WTC11 (cell line): ENCODE measurements at regions of chr3 and their contacts with region 1.

Region 1: DNA sequence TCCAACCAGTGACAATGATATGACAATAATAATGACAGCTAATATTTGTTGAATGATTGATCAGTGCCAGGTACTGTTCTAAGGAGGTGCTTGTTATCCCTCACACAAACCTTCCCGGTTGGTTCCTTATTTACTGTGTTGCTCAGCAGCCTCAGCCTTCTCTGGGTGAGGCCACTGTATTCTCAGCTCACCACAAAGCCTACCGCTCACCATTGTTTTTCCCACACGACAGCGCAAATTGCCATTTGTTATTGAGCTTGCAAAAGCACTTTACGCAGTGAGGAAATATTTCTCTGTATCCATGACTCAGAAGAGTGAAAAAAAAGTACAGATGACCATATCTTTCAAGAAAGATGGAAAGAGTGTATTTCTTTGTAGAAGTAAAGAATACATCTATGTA is 49.5 kb upstream of the PDZRN3 start:
- DNase-seq: no peak
- ATAC-seq: peak; percentile 90
- H3K4me3 Mint-ChIP-seq: no peak overlapping the region
- H3K27ac Mint-ChIP-seq: peak overlapping the region; percentile 16
- H3K4me1 Mint-ChIP-seq: peaks cover 60% of the 10 kb centered on the region
- H3K27me3 Mint-ChIP-seq: no peaks in the 10 kb centered on the region
- CTCF ChIP-seq: no peak

Region 2: GRCh38 chr3:73687106-73688004 is 13.1 kb after region 1 on chr3:
- CTCF ChIA-PET with region 1: no interaction called
- POLR2A ChIA-PET with region 1: interaction called, 14 read pairs
- DNase-seq: no peak
- ATAC-seq: no peak
- H3K4me3 Mint-ChIP-seq: no peak overlapping the region
- H3K27ac Mint-ChIP-seq: no peak overlapping the region
- H3K4me1 Mint-ChIP-seq: peaks cover 33% of the 10 kb centered on the region
- H3K27me3 Mint-ChIP-seq: no peaks in the 10 kb centered on the region; the same call in 1 of the 2 replicates
- CTCF ChIP-seq: no peak